CD8-positive, alpha-beta T cell (primary cell): ENCODE measurements at regions of chr9 and their contacts with region 1.

Region 1: DNA sequence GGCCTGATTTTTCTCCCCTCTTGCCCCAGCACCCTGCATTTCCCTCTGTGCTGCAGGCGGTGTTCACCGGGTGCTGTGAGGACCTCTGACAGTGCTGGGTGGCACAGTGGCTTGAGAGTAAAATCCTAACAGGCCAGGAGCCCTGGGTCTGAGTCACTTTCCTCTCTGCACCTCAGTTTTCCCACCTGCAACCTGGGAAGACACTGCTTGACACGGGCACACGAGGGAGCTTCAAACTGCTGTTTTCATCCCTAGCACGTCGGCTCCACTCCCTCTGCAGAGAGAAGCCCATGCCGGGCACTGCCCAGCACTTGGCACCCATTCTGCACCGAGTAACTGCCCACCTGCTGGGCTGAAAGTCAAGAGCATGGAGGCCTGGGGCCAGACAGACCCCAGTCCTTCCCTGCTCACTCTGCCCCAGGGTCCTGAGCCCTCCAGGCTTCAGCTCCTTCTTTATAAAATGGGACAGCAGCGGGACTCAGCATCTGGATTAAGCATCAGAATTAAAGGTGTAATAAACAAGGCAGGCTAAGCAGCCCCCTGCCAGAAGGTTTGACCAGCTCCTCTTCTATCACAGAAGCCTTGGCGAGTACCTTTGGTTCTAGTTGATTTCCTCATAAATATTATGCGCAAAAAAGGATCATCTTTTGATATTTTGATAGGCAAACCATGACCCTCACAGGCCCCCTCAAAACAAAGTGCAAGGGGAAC is 5.2 kb downstream of the GFI1B start:
- DNase-seq: no peak
- ATAC-seq: no peak
- H3K4me3 ChIP-seq: no peak overlapping the region
- H3K4me3 Mint-ChIP-seq: no peak overlapping the region
- H3K27ac ChIP-seq: no peak overlapping the region
- H3K27ac Mint-ChIP-seq: no peak overlapping the region
- H3K4me1 ChIP-seq: peaks cover 4% of the 10 kb centered on the region
- H3K4me1 Mint-ChIP-seq: peaks cover 6% of the 10 kb centered on the region
- H3K27me3 ChIP-seq: peaks cover 2 to 5% of the 10 kb centered on the region in 2 experiments
- H3K27me3 Mint-ChIP-seq: peaks cover 40% of the 10 kb centered on the region
- CTCF ChIP-seq: no peak

Region 2: DNA sequence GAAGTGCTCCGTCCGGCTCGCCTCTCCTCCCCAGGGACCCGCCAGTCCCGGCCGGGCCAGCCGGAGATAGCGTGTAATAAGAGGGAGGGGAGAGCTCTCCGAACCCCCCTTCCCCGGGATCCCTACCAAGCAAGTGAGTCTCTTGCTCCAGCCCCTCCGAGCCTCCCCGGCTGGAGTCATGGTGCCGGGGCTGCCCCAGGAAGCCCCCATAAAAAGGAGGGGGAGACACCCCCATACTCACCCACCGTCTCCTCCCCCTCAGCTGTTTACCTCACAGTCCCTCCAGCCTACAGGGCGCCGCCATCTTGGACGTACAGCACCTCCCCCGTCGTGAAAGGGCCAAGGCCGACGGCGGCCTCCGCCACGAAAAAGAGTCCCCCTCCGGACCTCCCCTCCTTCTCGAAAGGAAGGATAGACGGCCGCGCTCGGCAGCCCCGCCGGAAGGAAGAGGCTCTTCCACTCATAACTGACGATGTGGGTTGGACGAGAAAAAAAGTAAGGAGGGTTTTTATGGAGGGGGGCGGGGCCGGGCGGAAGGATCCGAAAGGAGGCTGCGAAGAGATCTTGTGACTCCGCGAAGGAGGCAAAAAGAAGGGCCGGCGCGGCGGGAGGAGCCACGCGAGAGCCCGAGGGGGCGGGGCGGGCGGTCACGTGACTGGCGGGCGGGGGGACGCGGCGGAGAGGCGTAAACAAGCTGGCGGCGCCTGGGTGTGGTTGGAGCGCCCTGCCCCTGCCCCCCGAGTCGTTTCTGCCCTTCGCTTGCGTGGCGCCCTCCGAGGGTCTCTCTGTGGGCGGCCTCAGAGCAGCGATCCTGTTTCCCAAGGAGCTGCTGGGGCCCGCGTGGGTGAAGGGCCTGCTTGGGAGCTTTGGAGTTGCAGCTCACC is 39.1 kb before region 1 on chr9 and contains the start of gene TSC1:
- CTCF ChIA-PET with region 1: no interaction called
- POLR2A ChIA-PET with region 1: no interaction called
- intact Hi-C with region 1: no loop called
- DNase-seq: peak; percentile 96 to 99 (median 98)
- ATAC-seq: peak; percentile 83
- H3K4me3 ChIP-seq: peak within 1 kb of the TSS; percentile 98 to 99
- H3K4me3 Mint-ChIP-seq: peak within 1 kb of the TSS; percentile 97
- H3K27ac ChIP-seq: peak within 1 kb of the TSS; percentile 90 to 100
- H3K27ac Mint-ChIP-seq: peak within 1 kb of the TSS; percentile 100
- H3K4me1 ChIP-seq: peaks cover 17% of the 10 kb centered on the region
- H3K4me1 Mint-ChIP-seq: peaks cover 29% of the 10 kb centered on the region
- H3K27me3 ChIP-seq: no peaks in the 10 kb centered on the region
- H3K27me3 Mint-ChIP-seq: no peaks in the 10 kb centered on the region
- CTCF ChIP-seq: no peak
- total RNA-seq, gene TSC1: 45.6 to 51.1 TPM

Region 3: GRCh38 chr9:133014696-133015095 is 31.1 kb after region 1 on chr9:
- CTCF ChIA-PET with region 1: no interaction called
- POLR2A ChIA-PET with region 1: no interaction called
- intact Hi-C with region 1: loop called in 1 of 2 experiments (anchors 1 kb)
- DNase-seq: no peak
- ATAC-seq: no peak
- H3K4me3 ChIP-seq: no peak overlapping the region
- H3K4me3 Mint-ChIP-seq: no peak overlapping the region
- H3K27ac ChIP-seq: no peak overlapping the region
- H3K27ac Mint-ChIP-seq: no peak overlapping the region
- H3K4me1 ChIP-seq: no peaks in the 10 kb centered on the region
- H3K4me1 Mint-ChIP-seq: no peaks in the 10 kb centered on the region
- H3K27me3 ChIP-seq: no peaks in the 10 kb centered on the region
- H3K27me3 Mint-ChIP-seq: peaks cover 6% of the 10 kb centered on the region
- CTCF ChIP-seq: no peak